A673 (cell line): ENCODE measurements at regions of chr4 and their contacts with region 1.

Region 1: GRCh38 chr4:98467627-98468072 is 190.8 kb downstream of the TSPAN5 start:
- DNase-seq: peak; percentile 92
- H3K4me3 ChIP-seq: peak overlapping the region; percentile 41
- H3K27ac ChIP-seq: no peak overlapping the region
- H3K4me1 ChIP-seq: peaks cover 11% of the 10 kb centered on the region
- H3K27me3 ChIP-seq: no peaks in the 10 kb centered on the region
- CTCF ChIP-seq: peak; percentile 87

Region 2: DNA sequence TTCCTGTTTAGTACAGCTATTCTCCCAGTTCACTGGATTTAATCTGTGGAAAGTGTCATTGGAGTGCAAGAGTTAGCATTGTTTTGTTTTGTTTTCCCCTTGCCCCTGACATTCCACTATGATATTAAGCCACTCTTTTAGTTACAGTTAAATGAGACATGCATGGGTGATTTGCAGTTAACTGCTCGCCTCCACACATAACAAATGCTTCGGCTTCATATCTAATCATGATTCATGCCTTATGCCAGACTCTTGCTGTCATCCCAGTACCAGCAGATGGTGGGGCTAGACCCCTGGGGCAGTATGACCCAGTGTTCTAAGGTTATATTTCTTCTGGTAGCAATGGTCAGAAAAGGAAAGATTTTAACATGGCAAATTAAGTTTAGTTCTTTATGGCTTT is 126.3 kb before region 1 on chr4:
- CTCF ChIA-PET with region 1: no interaction called
- POLR2A ChIA-PET with region 1: no interaction called
- intact Hi-C with region 1: no loop called
- DNase-seq: peak; percentile 21
- H3K4me3 ChIP-seq: no peak overlapping the region
- H3K27ac ChIP-seq: no peak overlapping the region
- H3K4me1 ChIP-seq: peaks cover 3% of the 10 kb centered on the region
- H3K27me3 ChIP-seq: no peaks in the 10 kb centered on the region
- CTCF ChIP-seq: no peak

Region 3: GRCh38 chr4:98546910-98547594 is 79.4 kb after region 1 on chr4:
- CTCF ChIA-PET with region 1: no interaction called
- POLR2A ChIA-PET with region 1: no interaction called
- intact Hi-C with region 1: loop called (anchors 5 kb)
- DNase-seq: peak; percentile 90
- H3K4me3 ChIP-seq: peak overlapping the region; percentile 18
- H3K27ac ChIP-seq: peak overlapping the region; percentile 39
- H3K4me1 ChIP-seq: peaks cover 12% of the 10 kb centered on the region
- H3K27me3 ChIP-seq: no peaks in the 10 kb centered on the region
- CTCF ChIP-seq: peak; percentile 40; the same call in 1 of the 2 replicates

Region 4: GRCh38 chr4:98566361-98567008 is 98.8 kb after region 1 on chr4:
- CTCF ChIA-PET with region 1: no interaction called
- POLR2A ChIA-PET with region 1: no interaction called
- intact Hi-C with region 1: no loop called
- DNase-seq: peak; percentile 26
- H3K4me3 ChIP-seq: no peak overlapping the region
- H3K27ac ChIP-seq: no peak overlapping the region
- H3K4me1 ChIP-seq: peaks cover 33% of the 10 kb centered on the region
- H3K27me3 ChIP-seq: no peaks in the 10 kb centered on the region
- CTCF ChIP-seq: no peak

Region 5: DNA sequence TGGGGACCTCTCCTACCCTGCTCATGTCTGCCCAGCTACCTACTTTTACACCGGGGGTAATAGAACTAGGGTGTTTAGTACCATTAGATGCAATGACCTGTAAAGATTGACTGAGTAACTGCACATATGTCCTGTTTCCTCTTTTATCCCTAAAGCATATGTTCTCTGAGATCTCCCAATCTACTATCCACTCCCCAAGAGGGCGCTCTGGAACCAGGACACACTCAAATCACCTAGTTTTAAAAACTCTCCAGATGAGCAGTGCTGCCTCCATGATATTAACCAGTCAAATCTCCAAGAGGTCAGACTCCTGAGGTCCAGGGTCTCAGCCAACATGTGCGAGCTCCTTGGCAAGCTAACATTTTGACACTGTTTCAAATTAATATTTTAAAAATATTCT is 277.7 kb after region 1 on chr4:
- CTCF ChIA-PET with region 1: no interaction called
- POLR2A ChIA-PET with region 1: no interaction called
- intact Hi-C with region 1: loop called (anchors 10 kb)
- DNase-seq: peak; percentile 46
- H3K4me3 ChIP-seq: no peak overlapping the region
- H3K27ac ChIP-seq: no peak overlapping the region
- H3K4me1 ChIP-seq: peaks cover 46% of the 10 kb centered on the region
- H3K27me3 ChIP-seq: no peaks in the 10 kb centered on the region
- CTCF ChIP-seq: peak; percentile 67

Region 6: GRCh38 chr4:98851806-98852205 is 384.2 kb after region 1 on chr4:
- CTCF ChIA-PET with region 1: interaction called, 10 read pairs
- POLR2A ChIA-PET with region 1: no interaction called
- intact Hi-C with region 1: loop called (anchors 5 kb)
- DNase-seq: peak; percentile 90
- H3K4me3 ChIP-seq: no peak overlapping the region
- H3K27ac ChIP-seq: peak overlapping the region; percentile 78
- H3K4me1 ChIP-seq: peaks cover 26% of the 10 kb centered on the region
- H3K27me3 ChIP-seq: no peaks in the 10 kb centered on the region
- CTCF ChIP-seq: no peak

Region 7: GRCh38 chr4:99054428-99054994 is 586.9 kb after region 1 on chr4:
- CTCF ChIA-PET with region 1: interaction called, 5 read pairs
- POLR2A ChIA-PET with region 1: no interaction called
- intact Hi-C with region 1: loop called (anchors 2 kb)
- DNase-seq: no peak
- H3K4me3 ChIP-seq: no peak overlapping the region
- H3K27ac ChIP-seq: no peak overlapping the region
- H3K4me1 ChIP-seq: peaks cover 7% of the 10 kb centered on the region
- H3K27me3 ChIP-seq: no peaks in the 10 kb centered on the region
- CTCF ChIP-seq: no peak